CD8-positive, alpha-beta T cell (primary cell): ENCODE measurements at regions of chr12 and their contacts with region 1.

Region 1: DNA sequence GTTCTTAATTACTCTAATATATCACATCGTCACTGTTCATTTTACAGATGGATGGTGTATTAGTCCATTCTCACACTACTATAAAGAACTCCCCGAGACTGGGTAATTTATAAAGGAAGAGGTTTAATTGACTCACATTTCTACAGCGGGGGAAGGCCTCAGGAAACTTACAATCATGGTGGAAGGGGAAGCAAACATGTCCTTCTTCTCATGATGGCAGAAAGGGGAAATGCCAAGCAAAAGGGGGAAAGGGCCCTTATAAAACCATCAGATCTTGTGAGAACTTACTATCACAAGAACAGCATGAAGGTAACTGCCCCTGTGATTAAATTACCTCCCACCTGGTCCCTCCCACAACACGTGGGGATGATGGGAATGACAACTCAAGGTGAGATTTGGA is 6.5 kb downstream of the TMBIM4 start:
- DNase-seq: no peak
- ATAC-seq: no peak
- H3K4me3 ChIP-seq: no peak overlapping the region
- H3K4me3 Mint-ChIP-seq: no peak overlapping the region
- H3K27ac ChIP-seq: no peak overlapping the region
- H3K27ac Mint-ChIP-seq: peak overlapping the region; percentile 49
- H3K4me1 ChIP-seq: peaks cover 22% of the 10 kb centered on the region
- H3K4me1 Mint-ChIP-seq: peaks cover 69% of the 10 kb centered on the region
- H3K27me3 ChIP-seq: no peaks in the 10 kb centered on the region
- H3K27me3 Mint-ChIP-seq: no peaks in the 10 kb centered on the region
- CTCF ChIP-seq: no peak

Region 2: GRCh38 chr12:66119870-66120241 is 43.4 kb before region 1 on chr12:
- CTCF ChIA-PET with region 1: no interaction called
- POLR2A ChIA-PET with region 1: no interaction called
- intact Hi-C with region 1: no loop called
- DNase-seq: no peak
- ATAC-seq: no peak
- H3K4me3 ChIP-seq: no peak overlapping the region
- H3K4me3 Mint-ChIP-seq: no peak overlapping the region
- H3K27ac ChIP-seq: no peak overlapping the region
- H3K27ac Mint-ChIP-seq: no peak overlapping the region
- H3K4me1 ChIP-seq: peaks cover 5% of the 10 kb centered on the region
- H3K4me1 Mint-ChIP-seq: peaks cover 12% of the 10 kb centered on the region
- H3K27me3 ChIP-seq: no peaks in the 10 kb centered on the region
- H3K27me3 Mint-ChIP-seq: no peaks in the 10 kb centered on the region
- CTCF ChIP-seq: no peak

Region 3: DNA sequence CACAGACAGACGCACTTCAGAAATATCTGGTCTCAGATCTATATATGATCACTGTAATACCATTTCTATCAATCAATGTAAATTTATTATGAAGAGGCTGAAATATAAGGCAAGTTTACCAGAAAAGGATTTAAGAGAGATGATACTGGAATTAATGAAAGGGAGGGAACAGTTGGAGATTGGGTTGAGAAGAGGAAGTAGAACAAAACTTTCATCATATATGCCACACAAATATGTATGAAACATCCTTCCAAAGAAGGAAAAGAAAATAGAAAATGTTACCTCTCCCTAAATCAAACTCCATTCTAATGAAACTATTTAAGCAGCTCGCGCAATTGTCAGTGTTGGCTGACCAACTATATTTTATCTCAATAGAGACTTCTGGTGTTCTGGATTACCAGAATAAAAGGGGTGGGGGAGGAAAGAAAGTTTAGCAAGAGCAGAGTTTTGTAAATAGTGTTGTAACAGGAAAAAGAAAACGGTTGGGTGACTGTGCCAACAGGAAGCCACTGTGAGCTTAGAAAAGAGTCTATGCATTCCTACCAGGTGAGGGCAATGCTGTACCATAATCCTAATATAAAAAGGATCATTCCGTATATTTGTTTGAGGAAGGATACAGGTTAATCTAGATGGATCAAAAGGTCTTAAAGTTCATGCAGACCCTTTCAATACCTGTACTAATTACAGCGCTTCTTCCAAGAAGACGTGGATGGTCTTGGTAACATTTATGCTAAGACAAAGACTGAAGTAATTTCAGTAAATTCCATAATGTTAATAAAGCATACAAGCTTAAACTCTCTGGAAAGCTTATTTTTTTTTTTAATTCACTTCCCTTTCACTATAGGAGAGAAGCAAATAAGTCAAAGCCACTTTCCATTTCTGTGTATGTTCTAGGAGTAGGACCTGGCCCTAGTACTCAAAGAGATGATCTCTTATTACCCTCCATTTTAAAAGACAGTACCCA is 18.2 kb before region 1 on chr12:
- CTCF ChIA-PET with region 1: interaction called, 3 read pairs
- POLR2A ChIA-PET with region 1: no interaction called
- intact Hi-C with region 1: loop called in 1 of 2 experiments (anchors 2 kb)
- DNase-seq: peak in 2 of 9 experiments; percentile 19 to 42
- ATAC-seq: no peak
- H3K4me3 ChIP-seq: no peak overlapping the region
- H3K4me3 Mint-ChIP-seq: no peak overlapping the region
- H3K27ac ChIP-seq: no peak overlapping the region
- H3K27ac Mint-ChIP-seq: peak overlapping the region; percentile 82
- H3K4me1 ChIP-seq: no peaks in the 10 kb centered on the region
- H3K4me1 Mint-ChIP-seq: peaks cover 21% of the 10 kb centered on the region
- H3K27me3 ChIP-seq: no peaks in the 10 kb centered on the region
- H3K27me3 Mint-ChIP-seq: no peaks in the 10 kb centered on the region
- CTCF ChIP-seq: peak; percentile 35